GM12878 (cell line): ENCODE measurements at regions of chr13 and their contacts with region 1.

Region 1: GRCh38 chr13:40026174-40026585 is 370.7 kb downstream of the COG6 start:
- DNase-seq: peak; percentile 100
- ATAC-seq: peak; percentile 95
- H3K4me3 ChIP-seq: no peak overlapping the region
- H3K27ac ChIP-seq: peak overlapping the region; percentile 64
- H3K4me1 ChIP-seq: peaks cover 22% of the 10 kb centered on the region
- H3K27me3 ChIP-seq: no peaks in the 10 kb centered on the region
- CTCF ChIP-seq: no peak
- EP300 ChIP-seq: peak; percentile 89 to 90
- POLR2A ChIP-seq: no peak
- RAD21 ChIP-seq: no peak

Region 2: GRCh38 chr13:39942552-39943273 is 83.5 kb before region 1 on chr13:
- CTCF ChIA-PET with region 1: interaction called, 5 read pairs
- POLR2A ChIA-PET with region 1: no interaction called
- RAD21 ChIA-PET with region 1: no interaction called
- SMC1A ChIA-PET with region 1: interaction called, 10 read pairs
- in situ Hi-C with region 1: no loop called
- intact Hi-C with region 1: loop called (anchors 2 kb)
- DNase-seq: peak; percentile 50
- ATAC-seq: peak; percentile 100
- H3K4me3 ChIP-seq: no peak overlapping the region
- H3K27ac ChIP-seq: no peak overlapping the region
- H3K4me1 ChIP-seq: no peaks in the 10 kb centered on the region
- H3K27me3 ChIP-seq: no peaks in the 10 kb centered on the region; a peak in 2 of 4 replicates
- CTCF ChIP-seq: peak; percentile 100; a peak in 5 of 6 replicates
- EP300 ChIP-seq: no peak
- POLR2A ChIP-seq: no peak
- RAD21 ChIP-seq: peak; percentile 95

Region 3: DNA sequence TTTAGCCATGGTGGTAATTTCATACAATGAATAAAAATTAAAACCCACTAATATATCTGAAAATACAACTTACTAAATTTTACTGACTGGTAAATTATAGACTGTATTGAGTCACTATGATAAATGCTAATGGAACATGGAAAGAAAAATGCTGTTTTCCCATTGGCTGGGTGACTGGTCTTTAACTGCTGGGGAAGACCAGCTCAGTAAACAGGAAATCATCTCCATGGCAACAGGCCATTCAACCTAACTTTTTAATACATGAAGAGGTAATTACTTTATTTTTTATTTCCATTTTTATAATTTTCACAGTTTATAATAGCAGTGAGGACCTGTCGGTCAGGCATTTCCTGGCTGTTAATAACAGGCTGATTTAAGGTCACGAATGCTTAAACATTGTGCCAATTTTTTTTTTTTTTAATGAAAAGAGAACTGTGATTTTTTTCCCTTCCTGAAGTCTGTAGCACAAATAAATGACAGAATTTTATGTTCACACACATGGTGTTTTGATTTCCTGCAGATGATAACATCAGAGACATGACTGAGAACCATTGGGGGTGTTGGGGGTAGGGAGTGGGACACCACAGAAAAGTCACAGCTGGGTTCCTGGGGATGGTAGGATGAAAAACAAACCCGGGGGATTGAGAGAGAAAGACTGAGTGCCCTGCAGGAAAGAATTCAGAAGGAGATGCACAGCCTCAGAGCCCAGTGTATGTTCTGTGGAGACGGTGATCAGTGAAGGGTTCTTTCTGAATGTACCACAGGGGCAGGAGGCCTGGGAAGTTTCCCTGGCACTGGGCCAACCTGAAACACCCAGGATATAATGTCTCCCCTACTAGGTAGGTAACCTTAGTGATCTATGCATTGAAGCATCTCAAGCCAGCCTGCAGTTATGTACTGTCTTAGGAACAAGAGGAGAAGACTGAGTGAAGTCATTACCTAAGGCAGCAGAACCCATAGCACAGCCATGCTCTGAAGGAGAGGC is 73.6 kb before region 1 on chr13:
- CTCF ChIA-PET with region 1: no interaction called
- POLR2A ChIA-PET with region 1: no interaction called
- RAD21 ChIA-PET with region 1: no interaction called
- SMC1A ChIA-PET with region 1: interaction called, 3 read pairs
- in situ Hi-C with region 1: no loop called
- intact Hi-C with region 1: loop called (anchors 5 kb)
- DNase-seq: no peak
- ATAC-seq: no peak
- H3K4me3 ChIP-seq: no peak overlapping the region
- H3K27ac ChIP-seq: no peak overlapping the region
- H3K4me1 ChIP-seq: peaks cover 8% of the 10 kb centered on the region; the same call in 1 of the 2 replicates
- H3K27me3 ChIP-seq: no peaks in the 10 kb centered on the region
- CTCF ChIP-seq: no peak
- EP300 ChIP-seq: no peak
- POLR2A ChIP-seq: no peak
- RAD21 ChIP-seq: no peak

Region 4: GRCh38 chr13:39967199-39967959 is 58.8 kb before region 1 on chr13:
- CTCF ChIA-PET with region 1: no interaction called
- POLR2A ChIA-PET with region 1: no interaction called
- RAD21 ChIA-PET with region 1: no interaction called
- SMC1A ChIA-PET with region 1: no interaction called
- in situ Hi-C with region 1: no loop called
- intact Hi-C with region 1: no loop called
- DNase-seq: no peak
- ATAC-seq: no peak
- H3K4me3 ChIP-seq: no peak overlapping the region
- H3K27ac ChIP-seq: no peak overlapping the region
- H3K4me1 ChIP-seq: no peaks in the 10 kb centered on the region
- H3K27me3 ChIP-seq: no peaks in the 10 kb centered on the region
- CTCF ChIP-seq: no peak
- EP300 ChIP-seq: no peak
- POLR2A ChIP-seq: no peak
- RAD21 ChIP-seq: no peak

Region 5: GRCh38 chr13:40047322-40047771 is 21.2 kb after region 1 on chr13:
- CTCF ChIA-PET with region 1: no interaction called
- POLR2A ChIA-PET with region 1: no interaction called
- RAD21 ChIA-PET with region 1: no interaction called
- SMC1A ChIA-PET with region 1: interaction called, 3 read pairs
- in situ Hi-C with region 1: no loop called
- intact Hi-C with region 1: loop called (anchors 1 kb)
- DNase-seq: peak; percentile 96
- ATAC-seq: peak; percentile 89
- H3K4me3 ChIP-seq: no peak overlapping the region
- H3K27ac ChIP-seq: peak overlapping the region; percentile 53; the same call in 1 of the 2 replicates
- H3K4me1 ChIP-seq: peaks cover 11% of the 10 kb centered on the region; the same call in 1 of the 2 replicates
- H3K27me3 ChIP-seq: peaks cover 0 to 2% of the 10 kb centered on the region in 2 experiments; a peak in 1 of 4 replicates
- CTCF ChIP-seq: no peak
- EP300 ChIP-seq: peak; percentile 53 to 70; a peak in 2 of 4 replicates
- POLR2A ChIP-seq: no peak
- RAD21 ChIP-seq: no peak

Region 6: DNA sequence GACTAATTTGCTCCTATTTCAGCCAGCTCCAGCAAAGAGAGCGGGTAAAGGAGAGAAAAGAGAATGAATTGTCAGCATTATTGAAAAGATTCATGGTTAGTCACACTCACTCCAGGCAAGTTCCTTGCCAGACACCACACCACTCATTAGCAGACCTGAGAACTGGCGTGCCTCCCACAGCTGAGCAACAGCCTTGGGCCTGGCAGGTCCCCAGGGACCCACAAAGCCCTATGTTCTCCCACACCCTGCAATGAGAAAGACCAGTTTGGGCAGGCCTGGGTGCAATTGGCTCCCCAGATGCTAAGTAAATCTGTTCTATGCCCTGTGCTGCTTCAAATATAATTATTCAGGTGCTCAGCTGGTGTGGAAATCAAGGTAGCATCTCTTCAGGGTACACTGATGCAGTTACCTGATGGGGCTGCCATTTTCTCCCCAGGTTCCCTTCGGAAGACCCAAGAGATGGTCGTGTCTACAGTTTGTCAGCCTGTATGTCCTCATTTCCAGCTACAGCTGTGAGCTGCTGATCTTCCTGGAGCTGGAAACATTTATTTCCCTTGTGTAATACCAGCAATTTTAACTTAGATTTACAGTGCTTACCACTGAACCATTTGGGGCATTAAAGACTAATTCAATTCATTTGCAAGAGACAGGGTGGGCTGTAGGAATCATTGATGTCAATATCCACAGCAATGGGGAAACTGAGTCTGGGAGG is 34.3 kb after region 1 on chr13:
- CTCF ChIA-PET with region 1: interaction called, 4 read pairs
- POLR2A ChIA-PET with region 1: no interaction called
- RAD21 ChIA-PET with region 1: interaction called, 13 read pairs
- SMC1A ChIA-PET with region 1: interaction called, 25 read pairs
- in situ Hi-C with region 1: no loop called
- intact Hi-C with region 1: loop called (anchors 1 kb)
- DNase-seq: peak; percentile 97
- ATAC-seq: peak; percentile 86
- H3K4me3 ChIP-seq: no peak overlapping the region
- H3K27ac ChIP-seq: peak overlapping the region; percentile 80
- H3K4me1 ChIP-seq: peaks cover 28% of the 10 kb centered on the region
- H3K27me3 ChIP-seq: no peaks in the 10 kb centered on the region
- CTCF ChIP-seq: no peak
- EP300 ChIP-seq: peak; percentile 65 to 79; a peak in 2 of 4 replicates
- POLR2A ChIP-seq: no peak
- RAD21 ChIP-seq: no peak

Region 7: DNA sequence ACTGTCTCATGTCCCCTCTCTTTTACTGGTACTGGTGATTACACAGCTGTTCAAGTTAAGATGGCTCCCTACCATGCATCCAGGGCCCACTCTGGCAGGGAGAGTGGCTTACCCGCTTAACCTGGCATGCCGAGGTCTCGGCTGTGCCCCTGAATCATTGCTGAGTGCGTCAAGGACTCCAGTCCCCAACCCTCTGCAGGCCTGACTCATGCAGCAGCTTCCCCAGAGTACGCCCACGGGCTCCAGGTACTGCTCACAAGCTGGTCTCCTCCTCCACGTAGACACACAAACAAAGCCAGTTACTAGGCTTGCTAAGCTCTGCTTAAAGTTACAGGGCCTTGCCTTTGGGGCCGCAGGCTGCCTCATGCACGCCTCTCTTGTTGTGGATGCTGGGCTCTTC is 76.7 kb after region 1 on chr13:
- CTCF ChIA-PET with region 1: no interaction called
- POLR2A ChIA-PET with region 1: no interaction called
- RAD21 ChIA-PET with region 1: no interaction called
- SMC1A ChIA-PET with region 1: no interaction called
- in situ Hi-C with region 1: no loop called
- intact Hi-C with region 1: loop called (anchors 10 kb)
- DNase-seq: no peak
- ATAC-seq: peak; percentile 21; the same call in 1 of the 3 replicates
- H3K4me3 ChIP-seq: no peak overlapping the region
- H3K27ac ChIP-seq: no peak overlapping the region
- H3K4me1 ChIP-seq: peaks cover 18% of the 10 kb centered on the region
- H3K27me3 ChIP-seq: peaks cover 6 to 7% of the 10 kb centered on the region in 2 experiments
- CTCF ChIP-seq: no peak
- EP300 ChIP-seq: no peak
- POLR2A ChIP-seq: no peak
- RAD21 ChIP-seq: no peak